ENCODE measurements at regions of chr20 and their contacts with region 1.

Region 1: DNA sequence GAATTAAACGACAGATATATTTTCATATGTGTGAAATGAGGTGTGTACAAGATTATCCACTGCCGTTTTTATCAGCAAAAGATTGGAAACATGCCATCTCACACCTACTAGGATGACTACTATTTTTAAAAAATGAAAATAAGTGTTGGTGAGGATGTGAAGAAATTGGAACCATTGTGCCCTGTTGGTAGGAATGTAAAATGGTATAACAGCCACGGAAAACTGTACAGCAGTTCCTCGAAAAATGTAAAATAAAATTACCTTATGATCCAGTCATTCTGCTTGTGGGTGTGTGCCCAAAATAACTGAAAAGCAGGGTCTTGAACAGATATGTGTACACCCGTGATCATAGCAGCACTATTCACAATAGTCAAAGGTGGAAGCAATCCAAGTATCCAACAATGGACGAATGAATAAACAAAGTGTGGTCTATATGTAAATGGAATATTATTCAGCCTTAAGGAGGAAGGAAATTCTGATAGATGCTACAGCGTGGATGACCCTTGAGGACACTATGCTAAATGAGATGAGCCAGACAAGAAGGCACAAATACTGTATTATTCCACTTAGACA is 27.0 kb upstream of the CCN5 start:
- DNase-seq: no peak
- H3K4me3 ChIP-seq: no peak overlapping the region
- H3K4me1 ChIP-seq: peaks cover 5% of the 10 kb centered on the region
- H3K27me3 ChIP-seq: no peaks in the 10 kb centered on the region

Region 2: DNA sequence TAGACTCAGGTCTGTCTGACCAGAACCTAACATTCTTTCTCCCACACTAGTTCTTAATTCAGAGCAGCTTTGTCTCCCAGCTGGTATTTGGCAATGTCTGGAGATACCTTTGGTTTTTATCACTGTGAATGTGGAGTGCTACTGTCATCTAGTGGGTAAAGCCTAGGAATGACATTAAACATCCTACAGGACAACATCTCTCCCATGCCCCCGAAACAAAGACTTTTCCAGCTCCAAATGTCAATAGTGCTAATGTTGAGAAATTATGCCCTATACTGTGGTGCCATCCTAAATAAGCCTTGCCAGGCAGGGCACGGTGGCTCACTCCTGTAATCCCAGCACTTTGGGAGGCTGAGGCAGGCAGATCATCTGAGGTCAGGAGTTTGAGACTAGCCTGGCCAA is 216.7 kb before region 1 on chr20:
- in situ Hi-C with region 1: no loop called
- DNase-seq: no peak
- H3K4me3 ChIP-seq: no peak overlapping the region
- H3K4me1 ChIP-seq: peaks cover 3% of the 10 kb centered on the region; the same call in 1 of the 2 replicates
- H3K27me3 ChIP-seq: no peaks in the 10 kb centered on the region

Region 3: DNA sequence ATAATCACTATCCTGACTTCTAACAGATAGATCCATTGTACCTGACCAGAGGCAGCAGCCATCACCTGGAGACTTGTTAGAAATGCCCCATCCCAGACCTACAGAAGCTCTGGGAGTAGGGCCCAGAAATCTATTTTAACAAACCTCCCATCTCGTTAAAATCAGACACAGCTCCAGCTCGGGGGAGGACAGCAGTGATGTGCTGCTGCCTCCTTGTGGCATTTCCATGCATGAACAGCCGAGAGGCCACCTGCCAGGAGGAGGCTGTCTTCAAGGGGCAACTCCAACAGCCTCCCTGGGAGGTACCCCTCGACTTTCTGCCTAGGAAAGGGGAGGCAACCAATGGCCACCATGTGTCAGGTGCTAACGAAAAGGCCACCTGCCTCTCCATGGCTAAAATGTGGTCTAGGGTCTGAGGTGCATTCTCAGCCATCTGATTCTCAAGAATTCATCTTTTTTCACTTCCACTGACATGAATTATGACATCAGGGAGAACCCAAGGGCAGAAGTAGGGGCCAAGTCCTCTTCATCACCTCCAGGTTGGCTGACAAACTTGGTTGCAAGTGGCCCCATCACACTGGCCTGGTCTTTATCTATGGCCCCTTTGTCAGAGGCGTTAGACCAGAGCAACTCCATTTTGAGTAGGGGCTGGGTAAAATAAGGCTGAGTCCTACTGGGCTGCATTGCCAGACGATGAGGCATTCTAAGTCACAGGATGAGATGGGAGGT is 45.4 kb after region 1 on chr20:
- in situ Hi-C with region 1: loop called (anchors 5 kb)
- DNase-seq: peak; percentile 38 to 77
- H3K4me3 ChIP-seq: no peak overlapping the region
- H3K4me1 ChIP-seq: peaks cover 6% of the 10 kb centered on the region
- H3K27me3 ChIP-seq: no peaks in the 10 kb centered on the region